ENCODE measurements at regions of chr14 and their contacts with region 1.

Region 1: DNA sequence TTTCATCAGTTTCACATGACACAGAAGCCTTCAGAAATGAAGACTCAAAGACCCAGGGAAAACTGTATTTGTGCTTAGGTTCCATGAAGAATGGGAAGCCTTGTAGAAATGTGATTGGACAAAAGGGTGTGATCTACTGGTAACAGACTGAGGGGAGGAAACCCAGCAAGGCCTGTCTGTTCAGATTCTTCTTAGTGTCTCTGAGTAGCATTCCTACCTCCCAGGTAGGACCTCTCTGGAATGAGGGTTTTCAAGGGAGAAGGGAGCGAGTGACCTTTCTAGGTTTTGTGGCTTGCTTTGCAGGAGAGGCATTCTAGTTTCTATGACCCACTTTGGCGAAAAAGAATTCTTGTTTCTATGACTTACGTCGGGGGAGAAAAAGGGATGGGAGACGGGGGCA is 401.7 kb downstream of the DPF3 start:
- DNase-seq: no peak
- ATAC-seq: no peak
- H3K4me3 ChIP-seq: no peak overlapping the region
- H3K27ac ChIP-seq: no peak overlapping the region
- H3K4me1 ChIP-seq: no peaks in the 10 kb centered on the region
- H3K27me3 ChIP-seq: no peaks in the 10 kb centered on the region
- CTCF ChIP-seq: no peak
- POLR2A ChIP-seq: no peak

Region 2: DNA sequence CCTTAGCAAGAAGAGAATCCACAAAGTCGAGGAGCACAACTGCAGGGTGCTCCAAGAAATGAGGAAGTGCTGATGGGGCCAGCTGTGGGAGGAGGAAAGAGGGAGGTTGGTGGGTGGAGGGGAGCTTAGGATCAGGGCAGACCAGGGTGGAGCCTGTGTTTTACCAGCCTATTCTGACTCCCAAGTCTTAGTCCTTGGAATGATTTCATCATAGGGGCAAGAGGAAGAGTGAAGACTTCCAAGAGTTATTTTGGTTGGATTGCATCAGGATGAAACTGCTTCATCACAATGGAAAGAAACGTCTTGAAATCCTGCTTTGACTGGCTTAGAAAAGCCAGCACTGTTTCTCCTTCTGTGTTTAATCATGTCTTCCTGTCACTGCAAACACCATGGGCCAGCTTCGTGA is 207.7 kb after region 1 on chr14:
- intact Hi-C with region 1: loop called in 1 of 2 experiments (anchors 5 kb)
- DNase-seq: no peak
- ATAC-seq: peak; percentile 36 to 70 (median 54)
- H3K4me3 ChIP-seq: no peak overlapping the region
- H3K27ac ChIP-seq: no peak overlapping the region
- H3K4me1 ChIP-seq: no peaks in the 10 kb centered on the region
- H3K27me3 ChIP-seq: no peaks in the 10 kb centered on the region
- CTCF ChIP-seq: no peak
- POLR2A ChIP-seq: no peak

Region 3: DNA sequence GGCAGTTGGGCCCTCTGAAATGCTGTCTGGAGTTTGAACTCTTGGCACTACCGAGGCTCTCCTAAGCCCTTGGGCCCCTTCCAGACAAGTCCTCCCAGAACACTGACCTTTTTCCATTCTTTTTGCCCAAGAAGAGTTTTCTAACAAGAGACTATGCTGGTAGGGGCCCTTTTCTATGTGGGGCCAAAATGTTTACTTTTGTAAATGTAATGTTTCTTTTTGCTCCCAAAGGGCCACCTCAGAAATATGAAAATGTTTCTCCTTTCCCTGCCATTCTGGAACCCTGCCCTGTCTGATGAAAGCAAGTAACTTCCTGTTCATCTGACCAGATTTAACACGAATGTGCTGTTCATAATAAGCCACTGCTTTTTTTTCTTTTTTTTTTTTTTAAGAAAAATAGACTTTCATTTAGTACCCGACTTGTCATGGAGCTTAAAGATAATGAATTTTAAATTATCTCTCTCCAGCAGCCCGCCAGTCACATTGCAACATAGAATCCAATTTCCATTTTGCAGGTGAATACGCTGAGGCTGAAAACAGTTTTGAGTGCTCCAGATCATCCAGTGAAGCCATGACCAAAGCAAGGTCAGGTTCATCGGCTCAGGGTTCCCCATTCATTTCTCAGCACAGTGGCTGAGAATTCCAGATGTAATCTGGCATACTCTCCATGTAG is 231.8 kb after region 1 on chr14:
- intact Hi-C with region 1: no loop called
- DNase-seq: peak in 1 of 3 donors; percentile 55
- ATAC-seq: peak; percentile 61 to 89 (median 74)
- H3K4me3 ChIP-seq: no peak overlapping the region
- H3K27ac ChIP-seq: peak overlapping the region in 1 of 3 donors; percentile 20
- H3K4me1 ChIP-seq: peaks cover 0 to 15% (median 0%) of the 10 kb centered on the region in 4 donors
- H3K27me3 ChIP-seq: no peaks in the 10 kb centered on the region
- CTCF ChIP-seq: no peak
- POLR2A ChIP-seq: no peak

Measured in right lobe of liver (tissue), 6 donors.